ENCODE measurements at regions of chr14 and their contacts with region 1.

Region 1: DNA sequence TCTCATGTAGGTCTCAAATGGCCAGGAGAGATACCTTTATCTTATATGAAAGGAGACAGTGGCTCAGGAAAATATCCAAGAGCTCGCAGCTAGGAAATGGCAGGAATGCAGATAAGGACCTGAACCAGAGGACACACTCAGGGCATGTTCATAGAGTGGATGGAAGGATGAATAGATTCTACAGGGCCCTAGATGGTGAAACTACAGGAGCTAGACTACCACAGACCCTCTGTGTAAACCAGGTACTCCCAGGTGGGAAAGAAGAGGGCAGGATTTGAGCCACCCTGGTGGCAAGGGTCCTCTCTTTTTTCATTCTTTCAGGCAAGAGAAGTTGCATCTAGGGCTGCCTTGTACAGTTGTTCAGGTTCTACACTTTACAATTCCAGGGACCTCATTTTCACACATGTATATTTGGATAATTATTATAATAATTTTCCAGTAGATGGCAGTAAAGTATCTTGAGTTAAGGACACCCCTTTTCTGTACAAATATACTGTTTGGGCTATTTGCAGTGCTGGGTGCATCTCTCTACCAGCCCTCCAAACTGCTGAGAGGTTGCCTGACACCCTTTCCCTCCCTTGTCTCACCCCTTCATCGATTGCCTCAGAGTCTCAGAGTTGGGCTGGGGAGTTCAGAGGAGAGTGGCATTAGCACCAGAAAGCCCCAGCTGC is 10.5 kb upstream of the ZDHHC22 start:
- DNase-seq: peak in 1 of 3 donors; percentile 10
- H3K4me3 ChIP-seq: no peak overlapping the region
- H3K4me3 Mint-ChIP-seq: no peak overlapping the region
- H3K27ac ChIP-seq: no peak overlapping the region
- H3K27ac Mint-ChIP-seq: no peak overlapping the region
- H3K4me1 ChIP-seq: no peaks in the 10 kb centered on the region
- H3K4me1 Mint-ChIP-seq: peaks cover 2% of the 10 kb centered on the region
- H3K27me3 ChIP-seq: peaks cover under 1 to 5% of the 10 kb centered on the region in 2 donors
- H3K27me3 Mint-ChIP-seq: peaks cover 9 to 21% (median 18%) of the 10 kb centered on the region in 3 donors
- CTCF ChIP-seq: peak; percentile 25

Region 2: DNA sequence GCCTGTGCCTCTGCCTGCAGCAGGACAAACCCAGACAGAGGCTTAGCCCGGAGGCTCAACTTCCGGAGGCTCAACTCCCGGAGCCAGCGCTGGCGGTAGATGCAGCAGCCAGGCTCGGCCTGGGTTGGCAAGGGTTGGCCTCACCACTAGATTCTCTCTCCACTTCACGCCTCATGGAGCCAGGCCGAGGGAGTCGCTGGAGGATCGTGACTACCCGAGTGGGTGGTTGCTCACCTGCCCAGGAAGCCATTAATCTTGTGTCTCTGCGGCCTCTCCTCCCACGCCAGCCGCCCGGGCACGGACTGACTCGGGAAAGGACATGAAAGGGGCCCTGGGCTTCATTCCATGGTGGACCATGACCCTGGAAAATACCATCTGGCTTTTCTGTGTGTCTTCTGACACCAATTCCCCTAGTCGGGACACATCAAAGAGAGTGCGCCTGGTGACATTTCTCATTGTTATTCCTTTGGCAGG is 755.3 kb before region 1 on chr14:
- intact Hi-C with region 1: no loop called
- DNase-seq: no peak
- H3K4me3 ChIP-seq: no peak overlapping the region
- H3K4me3 Mint-ChIP-seq: no peak overlapping the region
- H3K27ac ChIP-seq: no peak overlapping the region
- H3K27ac Mint-ChIP-seq: no peak overlapping the region
- H3K4me1 ChIP-seq: no peaks in the 10 kb centered on the region
- H3K4me1 Mint-ChIP-seq: no peaks in the 10 kb centered on the region
- H3K27me3 ChIP-seq: no peaks in the 10 kb centered on the region
- H3K27me3 Mint-ChIP-seq: peaks cover 5 to 26% (median 7%) of the 10 kb centered on the region in 3 donors
- CTCF ChIP-seq: no peak

Region 3: DNA sequence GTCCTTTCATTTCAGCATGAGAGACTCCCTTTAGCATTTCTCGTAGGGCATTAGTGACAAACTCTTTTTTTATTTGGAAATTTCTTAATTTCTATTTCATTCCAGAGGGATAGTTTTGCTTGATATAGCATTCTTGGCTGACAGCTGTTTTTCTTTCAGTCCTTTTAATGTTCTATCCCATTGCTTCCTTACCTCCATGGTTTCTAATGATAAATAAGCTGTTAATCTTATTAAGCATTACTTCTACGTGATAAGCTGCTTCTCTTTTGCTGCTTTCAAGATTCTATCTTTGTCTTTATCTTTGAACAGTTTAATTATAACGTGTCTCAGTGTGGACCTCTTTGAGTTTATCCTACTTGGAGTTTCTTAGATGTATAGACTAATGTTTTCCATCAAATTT is 18.0 kb after region 1 on chr14:
- intact Hi-C with region 1: no loop called
- DNase-seq: no peak
- H3K4me3 ChIP-seq: no peak overlapping the region
- H3K4me3 Mint-ChIP-seq: no peak overlapping the region
- H3K27ac ChIP-seq: no peak overlapping the region
- H3K27ac Mint-ChIP-seq: no peak overlapping the region
- H3K4me1 ChIP-seq: no peaks in the 10 kb centered on the region
- H3K4me1 Mint-ChIP-seq: no peaks in the 10 kb centered on the region
- H3K27me3 ChIP-seq: no peaks in the 10 kb centered on the region
- H3K27me3 Mint-ChIP-seq: peaks cover 11 to 14% (median 12%) of the 10 kb centered on the region in 3 donors
- CTCF ChIP-seq: no peak

Region 4: GRCh38 chr14:77311217-77311616 is 159.2 kb after region 1 on chr14:
- intact Hi-C with region 1: loop called (anchors 2 to 5 kb)
- DNase-seq: peak; percentile 18 to 51 (median 37)
- H3K4me3 ChIP-seq: no peak overlapping the region
- H3K4me3 Mint-ChIP-seq: no peak overlapping the region
- H3K27ac ChIP-seq: no peak overlapping the region
- H3K27ac Mint-ChIP-seq: peak overlapping the region in 3 of 7 donors; percentile 46 to 52 (median 51)
- H3K4me1 ChIP-seq: peaks cover 13 to 19% of the 10 kb centered on the region in 2 donors
- H3K4me1 Mint-ChIP-seq: peaks cover 18% of the 10 kb centered on the region
- H3K27me3 ChIP-seq: no peaks in the 10 kb centered on the region
- H3K27me3 Mint-ChIP-seq: peaks cover 0 to 2% (median 0%) of the 10 kb centered on the region in 3 donors
- CTCF ChIP-seq: no peak

Region 5: GRCh38 chr14:77554207-77554606 is 402.2 kb after region 1 on chr14:
- intact Hi-C with region 1: loop called in 1 of 2 experiments (anchors 10 kb)
- DNase-seq: peak in 1 of 3 donors; percentile 12
- H3K4me3 ChIP-seq: peak overlapping the region in 1 of 3 experiments; percentile 24
- H3K4me3 Mint-ChIP-seq: peak overlapping the region; percentile 17 to 57
- H3K27ac ChIP-seq: peak overlapping the region; percentile 37 to 66
- H3K27ac Mint-ChIP-seq: peak overlapping the region in 6 of 7 donors; percentile 70 to 93 (median 82)
- H3K4me1 ChIP-seq: peaks cover 39 to 46% of the 10 kb centered on the region in 2 donors
- H3K4me1 Mint-ChIP-seq: peaks cover 37% of the 10 kb centered on the region
- H3K27me3 ChIP-seq: no peaks in the 10 kb centered on the region
- H3K27me3 Mint-ChIP-seq: peaks cover 0 to 2% (median 0%) of the 10 kb centered on the region in 3 donors
- CTCF ChIP-seq: no peak

Measured in CD14-positive monocyte (primary cell).